Endothelial cell of umbilical vein (primary cell): ENCODE measurements at regions of chr2 and their contacts with region 1.

Region 1: GRCh38 chr2:188524519-188525113 is 232.9 kb downstream of the GULP1 start:
- DNase-seq: peak; percentile 65
- H3K4me3 ChIP-seq: no peak overlapping the region
- H3K27ac ChIP-seq: no peak overlapping the region
- H3K4me1 ChIP-seq: peaks cover 22% of the 10 kb centered on the region
- H3K27me3 ChIP-seq: no peaks in the 10 kb centered on the region
- CTCF ChIP-seq: peak; percentile 49 to 59
- POLR2A ChIP-seq: no peak

Region 2: GRCh38 chr2:188596054-188596453 is 71.4 kb after region 1 on chr2:
- CTCF ChIA-PET with region 1: no interaction called
- POLR2A ChIA-PET with region 1: no interaction called
- dilution Hi-C with region 1: no loop called
- intact Hi-C with region 1: no loop called
- DNase-seq: peak; percentile 86
- H3K4me3 ChIP-seq: no peak overlapping the region
- H3K27ac ChIP-seq: no peak overlapping the region
- H3K4me1 ChIP-seq: no peaks in the 10 kb centered on the region
- H3K27me3 ChIP-seq: no peaks in the 10 kb centered on the region
- CTCF ChIP-seq: no peak
- POLR2A ChIP-seq: no peak

Region 3: DNA sequence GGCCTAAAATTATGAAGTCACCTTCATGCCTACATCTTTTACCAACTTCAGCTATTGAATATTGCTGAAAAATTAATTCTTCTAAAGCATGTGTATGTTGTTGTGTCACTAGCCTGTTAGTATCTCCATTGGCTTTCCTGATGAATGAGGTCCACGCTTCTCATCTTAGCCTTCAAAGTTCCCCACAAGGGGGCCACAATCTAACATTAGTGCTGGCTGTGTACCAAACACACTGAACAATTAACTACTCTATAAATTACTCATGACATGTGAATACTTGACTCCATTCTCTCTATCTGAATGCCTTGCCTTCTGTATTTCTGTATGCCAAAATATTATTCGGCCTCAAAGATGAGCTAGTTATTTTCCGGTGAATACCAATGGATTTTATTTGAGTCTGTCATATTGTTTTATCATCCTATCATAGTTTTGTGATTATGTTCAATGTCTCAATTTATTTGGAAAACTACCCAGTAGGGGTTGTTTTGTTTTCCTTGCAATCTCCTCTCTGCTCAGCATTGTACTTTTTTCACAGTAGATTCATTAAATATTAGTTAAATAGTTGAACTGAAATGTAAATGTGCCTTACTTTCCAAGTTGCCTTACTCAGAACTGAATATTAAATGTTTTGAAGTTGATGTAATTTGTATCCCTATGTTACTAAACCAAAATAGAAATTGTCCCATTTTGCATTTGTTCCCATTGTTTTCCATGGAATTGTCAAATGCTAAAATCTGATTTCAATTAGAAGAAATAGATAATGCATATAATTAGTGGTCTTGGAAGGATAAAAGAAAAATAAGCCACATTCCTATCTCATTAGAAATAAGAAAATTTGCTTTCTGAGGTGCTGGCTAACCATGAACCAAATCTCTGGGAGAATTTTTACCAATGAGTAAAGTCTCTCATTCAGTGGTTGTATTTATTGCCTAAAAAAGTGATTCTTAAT is 241.2 kb after region 1 on chr2:
- CTCF ChIA-PET with region 1: interaction called, 5 read pairs
- POLR2A ChIA-PET with region 1: no interaction called
- dilution Hi-C with region 1: no loop called
- intact Hi-C with region 1: loop called (anchors 1 kb)
- DNase-seq: peak; percentile 86
- H3K4me3 ChIP-seq: no peak overlapping the region
- H3K27ac ChIP-seq: no peak overlapping the region
- H3K4me1 ChIP-seq: no peaks in the 10 kb centered on the region
- H3K27me3 ChIP-seq: no peaks in the 10 kb centered on the region
- CTCF ChIP-seq: peak; percentile 50 to 58
- POLR2A ChIP-seq: no peak

Region 4: DNA sequence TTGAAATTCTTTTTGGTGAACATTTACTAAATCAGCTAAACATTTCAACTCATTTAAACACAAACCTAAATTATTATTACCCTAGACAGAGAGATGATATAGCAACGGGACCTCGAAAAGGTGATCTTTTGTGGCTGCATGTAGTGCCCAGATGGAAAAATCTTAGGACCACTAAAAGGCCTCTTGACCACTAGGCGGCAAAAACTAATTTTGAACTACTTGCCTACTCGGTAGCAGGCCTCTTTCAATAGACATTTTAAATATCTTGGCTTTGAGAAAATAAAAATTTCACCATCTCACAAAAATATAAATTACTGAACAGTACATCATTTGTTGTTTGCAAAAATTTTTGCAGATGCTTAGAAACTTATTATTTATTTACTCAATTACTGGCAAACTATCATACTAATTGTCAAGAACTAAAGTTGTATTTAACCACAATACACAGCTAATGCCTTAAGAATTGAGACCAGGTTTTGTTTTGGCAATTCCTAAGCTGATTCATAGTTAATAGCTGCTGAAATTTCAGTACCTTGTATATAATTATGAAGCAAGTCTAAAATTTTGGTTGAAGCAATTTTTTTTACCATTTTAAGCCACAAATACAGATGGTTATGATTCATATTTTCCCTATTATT is 458.9 kb after region 1 on chr2:
- CTCF ChIA-PET with region 1: interaction called, 250 read pairs
- POLR2A ChIA-PET with region 1: interaction called, 3 read pairs
- dilution Hi-C with region 1: no loop called
- intact Hi-C with region 1: no loop called
- DNase-seq: peak; percentile 37
- H3K4me3 ChIP-seq: no peak overlapping the region
- H3K27ac ChIP-seq: no peak overlapping the region
- H3K4me1 ChIP-seq: peaks cover 12% of the 10 kb centered on the region
- H3K27me3 ChIP-seq: no peaks in the 10 kb centered on the region
- CTCF ChIP-seq: peak; percentile 35
- POLR2A ChIP-seq: no peak

Region 5: DNA sequence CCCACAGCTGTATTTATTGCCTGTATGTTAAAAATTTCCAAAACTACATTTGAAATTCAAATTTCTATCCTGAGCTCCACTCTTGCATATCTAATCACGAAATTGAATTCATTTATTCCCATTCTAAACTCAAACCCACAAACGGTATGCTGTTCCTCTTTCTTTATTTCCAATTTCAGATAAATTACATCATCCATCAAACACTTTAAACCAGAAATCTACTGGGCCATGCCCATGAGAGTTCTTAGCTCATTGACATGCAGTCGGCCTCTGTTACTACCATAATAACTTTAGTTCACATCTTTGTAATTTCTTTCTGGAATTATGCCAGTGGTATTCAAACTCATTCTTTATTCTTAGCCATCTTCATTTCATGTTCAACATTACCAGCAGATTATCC is 549.9 kb after region 1 on chr2:
- CTCF ChIA-PET with region 1: interaction called, 13 read pairs
- POLR2A ChIA-PET with region 1: no interaction called
- dilution Hi-C with region 1: no loop called
- intact Hi-C with region 1: no loop called
- DNase-seq: no peak
- H3K4me3 ChIP-seq: no peak overlapping the region
- H3K27ac ChIP-seq: no peak overlapping the region
- H3K4me1 ChIP-seq: no peaks in the 10 kb centered on the region
- H3K27me3 ChIP-seq: no peaks in the 10 kb centered on the region
- CTCF ChIP-seq: no peak
- POLR2A ChIP-seq: no peak

Region 6: GRCh38 chr2:189096769-189097447 is 572.3 kb after region 1 on chr2:
- CTCF ChIA-PET with region 1: interaction called, 6 read pairs
- POLR2A ChIA-PET with region 1: no interaction called
- dilution Hi-C with region 1: no loop called
- intact Hi-C with region 1: loop called (anchors 2 kb)
- DNase-seq: peak; percentile 61
- H3K4me3 ChIP-seq: no peak overlapping the region
- H3K27ac ChIP-seq: peak overlapping the region; percentile 50
- H3K4me1 ChIP-seq: peaks cover 15% of the 10 kb centered on the region
- H3K27me3 ChIP-seq: no peaks in the 10 kb centered on the region
- CTCF ChIP-seq: no peak
- POLR2A ChIP-seq: no peak